ENCODE measurements at regions of chr14 and their contacts with region 1.

Region 1: GRCh38 chr14:74612350-74613021 is 449 bp upstream of the LTBP2 start:
- DNase-seq: peak; percentile 57 to 99
- H3K4me3 ChIP-seq: peak overlapping the region; percentile 76
- H3K27ac ChIP-seq: no peak overlapping the region
- H3K4me1 ChIP-seq: peaks cover 63% of the 10 kb centered on the region
- H3K27me3 ChIP-seq: no peaks in the 10 kb centered on the region
- CTCF ChIP-seq: peak; percentile 72

Region 2: GRCh38 chr14:74493343-74494261 is 118.9 kb before region 1 on chr14 and contains the start of gene ISCA2:
- CTCF ChIA-PET with region 1: interaction called, 5 read pairs
- POLR2A ChIA-PET with region 1: interaction called, 4 read pairs
- intact Hi-C with region 1: loop called (anchors 2 kb)
- DNase-seq: peak; percentile 100
- H3K4me3 ChIP-seq: peak within 1 kb of the TSS; percentile 81
- H3K27ac ChIP-seq: peak within 1 kb of the TSS; percentile 54
- H3K4me1 ChIP-seq: peaks cover 52% of the 10 kb centered on the region
- H3K27me3 ChIP-seq: no peaks in the 10 kb centered on the region
- CTCF ChIP-seq: no peak
- total RNA-seq, gene ISCA2: 83.2 and 86.5 TPM in 2 replicates

Region 3: DNA sequence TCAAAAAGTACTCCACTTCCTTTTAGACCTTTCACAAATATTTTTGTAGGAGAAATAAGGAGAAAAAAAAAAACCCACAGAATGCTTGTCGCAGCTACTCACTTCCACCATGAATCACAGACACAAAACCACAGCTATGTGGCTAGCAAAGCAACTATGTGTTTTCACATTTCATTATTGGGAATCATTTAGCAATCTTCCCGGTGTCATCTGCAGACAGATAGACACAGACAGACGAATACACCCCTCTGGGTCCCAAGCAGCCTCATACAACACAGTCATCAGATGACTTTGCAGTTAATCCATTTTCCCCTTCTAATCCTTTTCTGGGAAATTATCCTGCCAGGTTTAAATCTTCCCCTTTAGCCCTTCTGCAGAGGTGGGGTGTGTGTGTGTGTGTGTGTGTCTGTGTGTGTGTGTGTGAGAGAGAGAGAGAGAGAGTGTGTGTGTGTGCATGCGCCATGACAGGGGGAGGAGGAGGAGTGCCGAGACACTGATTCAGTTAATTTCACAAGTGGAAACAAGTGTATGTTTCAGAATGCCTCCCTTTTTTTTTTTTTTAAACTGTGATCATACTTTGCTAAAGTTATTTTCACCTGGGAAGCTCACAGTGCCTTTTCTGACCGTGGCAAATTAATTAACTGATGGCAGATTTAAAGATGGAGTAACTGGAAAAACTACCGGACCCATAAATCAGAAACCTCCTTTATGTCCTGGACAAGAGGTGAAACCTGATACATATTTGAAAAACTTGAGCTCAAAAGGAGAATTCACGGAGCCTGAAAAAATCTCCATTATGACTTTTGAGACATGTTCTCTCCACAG is 40.4 kb before region 1 on chr14:
- CTCF ChIA-PET with region 1: interaction called, 82 read pairs
- POLR2A ChIA-PET with region 1: interaction called, 25 read pairs
- intact Hi-C with region 1: loop called (anchors 1 kb)
- DNase-seq: peak; percentile 87 to 100
- H3K4me3 ChIP-seq: peak overlapping the region; percentile 52
- H3K27ac ChIP-seq: peak overlapping the region; percentile 99
- H3K4me1 ChIP-seq: peaks cover 92% of the 10 kb centered on the region
- H3K27me3 ChIP-seq: no peaks in the 10 kb centered on the region
- CTCF ChIP-seq: no peak

Region 4: GRCh38 chr14:74762917-74763802 is 150.7 kb after region 1 on chr14 and contains the start of gene YLPM1:
- CTCF ChIA-PET with region 1: interaction called, 15 read pairs
- POLR2A ChIA-PET with region 1: no interaction called
- intact Hi-C with region 1: loop called (anchors 1 kb)
- DNase-seq: peak; percentile 98 to 99
- H3K4me3 ChIP-seq: peak within 1 kb of the TSS; percentile 80
- H3K27ac ChIP-seq: peak within 1 kb of the TSS; percentile 55
- H3K4me1 ChIP-seq: peaks cover 45% of the 10 kb centered on the region
- H3K27me3 ChIP-seq: no peaks in the 10 kb centered on the region
- CTCF ChIP-seq: peak; percentile 40; the same call in 1 of the 2 replicates
- total RNA-seq, gene YLPM1: 146 and 170 TPM in 2 replicates

Region 5: GRCh38 chr14:74804219-74804826 is 191.8 kb after region 1 on chr14:
- CTCF ChIA-PET with region 1: interaction called, 41 read pairs
- POLR2A ChIA-PET with region 1: interaction called, 7 read pairs
- intact Hi-C with region 1: loop called (anchors 1 kb)
- DNase-seq: peak; percentile 59 to 65
- H3K4me3 ChIP-seq: no peak overlapping the region
- H3K27ac ChIP-seq: no peak overlapping the region
- H3K4me1 ChIP-seq: no peaks in the 10 kb centered on the region
- H3K27me3 ChIP-seq: no peaks in the 10 kb centered on the region
- CTCF ChIP-seq: peak; percentile 89

Region 6: GRCh38 chr14:74905375-74906142 is 293.1 kb after region 1 on chr14:
- CTCF ChIA-PET with region 1: interaction called, 13 read pairs
- POLR2A ChIA-PET with region 1: no interaction called
- intact Hi-C with region 1: loop called (anchors 1 kb)
- DNase-seq: peak in 1 of 2 experiments; percentile 78
- H3K4me3 ChIP-seq: no peak overlapping the region
- H3K27ac ChIP-seq: no peak overlapping the region
- H3K4me1 ChIP-seq: no peaks in the 10 kb centered on the region
- H3K27me3 ChIP-seq: no peaks in the 10 kb centered on the region
- CTCF ChIP-seq: peak; percentile 100